ENCODE measurements at regions of chr9 and their contacts with region 1.

Region 1: GRCh38 chr9:5186416-5187169 is 1.2 kb upstream of the INSL6 start:
- DNase-seq: peak; percentile 74
- H3K4me3 Mint-ChIP-seq: no peak overlapping the region
- H3K27ac Mint-ChIP-seq: no peak overlapping the region
- H3K4me1 Mint-ChIP-seq: peaks cover 15% of the 10 kb centered on the region
- H3K27me3 Mint-ChIP-seq: no peaks in the 10 kb centered on the region

Region 2: GRCh38 chr9:5263351-5264218 is 77.0 kb after region 1 on chr9:
- CTCF ChIA-PET with region 1: interaction called, 6 read pairs
- POLR2A ChIA-PET with region 1: no interaction called
- intact Hi-C with region 1: loop called (anchors 5 kb)
- DNase-seq: no peak
- H3K4me3 Mint-ChIP-seq: no peak overlapping the region
- H3K27ac Mint-ChIP-seq: no peak overlapping the region
- H3K4me1 Mint-ChIP-seq: peaks cover 12% of the 10 kb centered on the region
- H3K27me3 Mint-ChIP-seq: no peaks in the 10 kb centered on the region

Region 3: GRCh38 chr9:5336688-5337087 is 150.1 kb after region 1 on chr9:
- CTCF ChIA-PET with region 1: no interaction called
- POLR2A ChIA-PET with region 1: no interaction called
- intact Hi-C with region 1: loop called (anchors 5 kb)
- DNase-seq: peak; percentile 41
- H3K4me3 Mint-ChIP-seq: peak overlapping the region; percentile 37
- H3K27ac Mint-ChIP-seq: peak overlapping the region; percentile 69
- H3K4me1 Mint-ChIP-seq: peaks cover 41% of the 10 kb centered on the region
- H3K27me3 Mint-ChIP-seq: no peaks in the 10 kb centered on the region

Region 4: DNA sequence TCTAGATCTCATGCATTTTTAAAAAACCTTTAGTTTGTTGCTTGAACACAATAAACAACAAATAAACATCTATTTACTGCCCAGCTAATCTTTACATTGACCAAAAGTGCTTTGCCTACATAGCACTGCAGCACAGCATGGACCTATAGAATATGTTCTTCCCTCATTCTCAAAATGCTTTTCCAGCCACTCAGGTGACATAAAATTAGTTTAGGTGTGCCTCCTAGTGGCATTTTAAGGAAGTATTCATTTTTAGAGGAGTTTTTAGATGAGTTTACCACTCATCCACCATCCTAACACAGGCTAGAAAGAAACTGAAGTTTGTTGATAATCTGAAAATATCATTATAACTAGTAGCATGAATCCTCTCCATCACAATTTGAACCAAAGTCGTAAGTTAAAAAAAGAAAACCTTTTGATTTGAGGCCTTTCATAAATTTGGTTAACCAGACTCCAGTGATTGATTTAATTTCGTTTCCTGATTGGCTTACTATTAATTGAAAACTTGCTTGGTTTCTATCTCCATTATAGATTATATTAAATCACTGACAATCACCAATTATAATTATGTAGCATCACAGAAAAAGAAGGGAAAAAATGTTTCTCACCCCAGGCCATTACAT is 238.5 kb after region 1 on chr9:
- CTCF ChIA-PET with region 1: interaction called, 70 read pairs
- POLR2A ChIA-PET with region 1: no interaction called
- intact Hi-C with region 1: loop called (anchors 1 kb)
- DNase-seq: no peak
- H3K4me3 Mint-ChIP-seq: no peak overlapping the region
- H3K27ac Mint-ChIP-seq: no peak overlapping the region
- H3K4me1 Mint-ChIP-seq: peaks cover 7% of the 10 kb centered on the region
- H3K27me3 Mint-ChIP-seq: no peaks in the 10 kb centered on the region

Region 5: DNA sequence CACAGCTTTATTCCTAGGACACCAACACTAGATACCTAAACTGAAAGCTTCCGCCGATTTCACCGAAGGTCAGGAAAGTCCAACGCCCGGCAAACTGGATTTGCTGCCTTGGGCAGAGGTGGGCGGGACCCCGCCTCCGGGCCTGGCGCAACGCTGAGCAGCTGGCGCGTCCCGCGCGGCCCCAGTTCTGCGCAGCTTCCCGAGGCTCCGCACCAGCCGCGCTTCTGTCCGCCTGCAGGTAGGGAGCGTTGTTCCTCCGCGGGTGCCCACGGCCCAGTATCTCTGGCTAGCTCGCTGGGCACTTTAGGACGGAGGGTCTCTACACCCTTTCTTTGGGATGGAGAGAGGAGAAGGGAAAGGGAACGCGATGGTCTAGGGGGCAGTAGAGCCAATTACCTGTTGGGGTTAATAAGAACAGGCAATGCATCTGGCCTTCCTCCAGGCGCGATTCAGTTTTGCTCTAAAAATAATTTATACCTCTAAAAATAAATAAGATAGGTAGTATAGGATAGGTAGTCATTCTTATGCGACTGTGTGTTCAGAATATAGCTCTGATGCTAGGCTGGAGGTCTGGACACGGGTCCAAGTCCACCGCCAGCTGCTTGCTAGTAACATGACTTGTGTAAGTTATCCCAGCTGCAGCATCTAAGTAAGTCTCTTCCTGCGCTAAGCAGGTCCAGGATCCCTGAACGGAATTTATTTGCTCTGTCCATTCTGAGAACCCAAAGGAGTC is 263.9 kb after region 1 on chr9 and contains the start of gene CD274:
- CTCF ChIA-PET with region 1: interaction called, 10 read pairs
- POLR2A ChIA-PET with region 1: interaction called, 3 read pairs
- intact Hi-C with region 1: no loop called
- DNase-seq: peak; percentile 92
- H3K4me3 Mint-ChIP-seq: peak within 1 kb of the TSS; percentile 86
- H3K27ac Mint-ChIP-seq: peak within 1 kb of the TSS; percentile 90
- H3K4me1 Mint-ChIP-seq: peaks cover 59% of the 10 kb centered on the region
- H3K27me3 Mint-ChIP-seq: no peaks in the 10 kb centered on the region
- total RNA-seq, gene CD274: 28.3 to 32.4 TPM

Region 6: GRCh38 chr9:5593904-5594303 is 407.3 kb after region 1 on chr9:
- CTCF ChIA-PET with region 1: interaction called, 32 read pairs
- POLR2A ChIA-PET with region 1: no interaction called
- intact Hi-C with region 1: loop called (anchors 1 kb)
- DNase-seq: no peak
- H3K4me3 Mint-ChIP-seq: no peak overlapping the region
- H3K27ac Mint-ChIP-seq: no peak overlapping the region
- H3K4me1 Mint-ChIP-seq: peaks cover 23% of the 10 kb centered on the region
- H3K27me3 Mint-ChIP-seq: no peaks in the 10 kb centered on the region

Measured in activated CD4-positive, alpha-beta memory T cell treated with anti-CD3 and anti-CD28 coated beads for 36 hours (primary cell).